ENCODE measurements at regions of chr7 and their contacts with region 1.

Region 1: DNA sequence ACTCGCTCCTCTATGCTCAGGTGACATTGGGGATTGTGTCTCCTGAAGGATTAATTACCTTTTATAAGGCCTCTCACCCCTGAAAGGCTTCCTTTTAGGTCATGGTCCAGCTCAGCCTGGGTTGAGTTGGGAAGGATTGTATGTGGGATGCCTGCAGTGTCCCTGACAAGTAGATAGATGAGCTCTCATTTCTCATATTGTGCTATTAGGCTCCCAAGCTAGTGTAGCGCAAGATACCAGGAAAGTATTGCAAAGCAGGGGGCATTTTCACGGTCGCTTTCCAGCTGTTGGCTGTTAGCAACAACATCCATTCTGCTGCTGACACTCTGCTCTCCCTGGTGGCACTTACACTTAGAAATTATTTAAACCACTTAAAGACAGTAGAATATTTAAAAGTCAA is 31.9 kb downstream of the NXPH1 start:
- DNase-seq: no peak
- ATAC-seq: no peak
- H3K4me3 ChIP-seq: no peak overlapping the region
- H3K27ac ChIP-seq: no peak overlapping the region
- H3K4me1 ChIP-seq: no peaks in the 10 kb centered on the region
- H3K27me3 ChIP-seq: no peaks in the 10 kb centered on the region
- CTCF ChIP-seq: no peak

Region 2: DNA sequence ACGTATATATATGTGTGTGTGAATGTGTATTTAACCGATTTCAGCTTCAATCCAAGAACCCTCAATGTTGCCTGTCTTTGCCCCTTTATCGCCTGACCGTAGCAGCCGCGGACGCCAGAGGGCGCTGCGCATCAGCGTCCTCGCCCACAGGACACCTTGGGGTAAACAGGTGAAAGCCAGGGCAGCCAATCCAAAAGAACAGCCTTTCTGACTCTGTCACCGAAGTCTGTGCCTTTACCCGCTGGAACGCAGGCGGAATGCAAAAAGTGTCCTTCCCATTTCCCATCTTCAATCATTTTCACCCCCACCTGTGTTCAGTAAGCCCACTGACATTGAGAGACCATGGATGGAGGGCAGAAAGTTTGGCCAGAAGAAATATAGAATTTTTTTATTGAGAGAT is 28.4 kb before region 1 on chr7:
- CTCF ChIA-PET with region 1: no interaction called
- POLR2A ChIA-PET with region 1: no interaction called
- in situ Hi-C with region 1: no loop called
- intact Hi-C with region 1: no loop called
- DNase-seq: no peak
- ATAC-seq: peak; percentile 77
- H3K4me3 ChIP-seq: no peak overlapping the region
- H3K27ac ChIP-seq: no peak overlapping the region
- H3K4me1 ChIP-seq: peaks cover 5% of the 10 kb centered on the region; the same call in 1 of the 2 replicates
- H3K27me3 ChIP-seq: peaks cover 55% of the 10 kb centered on the region
- CTCF ChIP-seq: peak; percentile 96

Region 3: GRCh38 chr7:9192969-9193368 is 727.6 kb after region 1 on chr7:
- CTCF ChIA-PET with region 1: no interaction called
- POLR2A ChIA-PET with region 1: interaction called, 11 read pairs
- in situ Hi-C with region 1: no loop called
- intact Hi-C with region 1: no loop called
- DNase-seq: no peak
- ATAC-seq: no peak
- H3K4me3 ChIP-seq: no peak overlapping the region
- H3K27ac ChIP-seq: no peak overlapping the region
- H3K4me1 ChIP-seq: no peaks in the 10 kb centered on the region
- H3K27me3 ChIP-seq: no peaks in the 10 kb centered on the region
- CTCF ChIP-seq: no peak

Measured in Panc1 (cell line).